Activated CD4-positive, alpha-beta memory T cell treated with anti-CD3 and anti-CD28 coated beads, Interleukin-2, amount 10 ng/mL, durations not matched to agents 7 days and 5 days (primary cell): ENCODE measurements at regions of chr22 and their contacts with region 1.

Region 1: DNA sequence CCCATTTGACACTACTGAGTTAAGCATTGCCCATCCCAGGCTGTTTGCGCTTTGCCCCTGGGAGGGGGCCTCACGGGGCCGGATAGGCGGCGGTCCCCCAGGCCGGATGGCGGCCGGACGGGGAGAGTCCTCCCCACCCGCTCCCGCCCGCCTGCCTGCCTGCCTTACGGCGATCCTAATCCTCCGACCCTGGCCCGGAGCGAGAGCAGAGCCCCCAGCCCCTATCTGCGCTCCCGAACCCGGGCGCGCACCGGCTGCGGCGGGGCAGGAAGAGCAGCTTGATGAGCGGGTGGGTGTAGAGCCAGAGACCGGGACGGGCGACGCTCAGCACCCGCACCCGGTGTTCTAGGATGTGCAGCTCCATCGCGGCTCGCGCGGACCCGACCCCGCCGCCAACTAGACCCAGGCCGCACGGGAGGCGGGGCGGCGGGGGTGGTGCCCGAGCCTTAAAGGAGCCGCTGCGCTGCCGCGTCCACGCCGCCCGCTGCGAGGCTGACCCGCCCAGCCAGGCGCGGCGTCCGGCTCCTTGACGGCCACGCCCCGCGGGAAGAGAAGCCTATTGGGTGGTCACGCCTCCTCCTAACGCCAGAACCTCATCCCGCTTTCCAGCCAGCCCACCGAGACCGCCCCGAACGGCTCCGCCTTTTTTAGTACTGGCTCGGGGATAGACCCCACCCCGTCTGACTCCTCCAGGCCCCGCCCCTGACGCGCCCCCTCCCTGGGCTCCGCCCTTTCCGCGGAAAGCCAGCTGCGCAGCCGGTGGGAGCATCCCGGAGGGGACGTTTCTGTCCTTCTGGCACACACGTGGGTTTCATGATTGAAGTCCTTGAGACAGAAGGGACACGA is at the start of gene CASTOR1:
- DNase-seq: peak; percentile 94
- H3K4me3 Mint-ChIP-seq: peak within 1 kb of the TSS; percentile 77
- H3K27ac Mint-ChIP-seq: peak within 1 kb of the TSS; percentile 81
- H3K4me1 Mint-ChIP-seq: peaks cover 61% of the 10 kb centered on the region
- H3K27me3 Mint-ChIP-seq: no peaks in the 10 kb centered on the region
- total RNA-seq, gene CASTOR1: 14.2 to 14.6 TPM

Region 2: GRCh38 chr22:29951791-29952413 is 337.5 kb before region 1 on chr22:
- CTCF ChIA-PET with region 1: no interaction called
- POLR2A ChIA-PET with region 1: no interaction called
- DNase-seq: no peak
- H3K4me3 Mint-ChIP-seq: no peak overlapping the region
- H3K27ac Mint-ChIP-seq: no peak overlapping the region
- H3K4me1 Mint-ChIP-seq: no peaks in the 10 kb centered on the region
- H3K27me3 Mint-ChIP-seq: no peaks in the 10 kb centered on the region

Region 3: GRCh38 chr22:30116362-30117117 is 172.8 kb before region 1 on chr22:
- CTCF ChIA-PET with region 1: interaction called, 19 read pairs
- POLR2A ChIA-PET with region 1: no interaction called
- DNase-seq: no peak
- H3K4me3 Mint-ChIP-seq: no peak overlapping the region
- H3K27ac Mint-ChIP-seq: no peak overlapping the region
- H3K4me1 Mint-ChIP-seq: peaks cover 37% of the 10 kb centered on the region
- H3K27me3 Mint-ChIP-seq: peaks cover 5% of the 10 kb centered on the region

Region 4: GRCh38 chr22:30224161-30224857 is 65.0 kb before region 1 on chr22:
- CTCF ChIA-PET with region 1: no interaction called
- POLR2A ChIA-PET with region 1: no interaction called
- DNase-seq: no peak
- H3K4me3 Mint-ChIP-seq: no peak overlapping the region
- H3K27ac Mint-ChIP-seq: no peak overlapping the region
- H3K4me1 Mint-ChIP-seq: peaks cover 93% of the 10 kb centered on the region
- H3K27me3 Mint-ChIP-seq: no peaks in the 10 kb centered on the region

Region 5: GRCh38 chr22:30277547-30278344 is 11.6 kb before region 1 on chr22:
- CTCF ChIA-PET with region 1: interaction called, 12 read pairs
- POLR2A ChIA-PET with region 1: interaction called, 7 read pairs
- DNase-seq: no peak
- H3K4me3 Mint-ChIP-seq: no peak overlapping the region
- H3K27ac Mint-ChIP-seq: no peak overlapping the region
- H3K4me1 Mint-ChIP-seq: peaks cover 78% of the 10 kb centered on the region
- H3K27me3 Mint-ChIP-seq: no peaks in the 10 kb centered on the region

Region 6: GRCh38 chr22:30326706-30327362 is 37.5 kb after region 1 on chr22 and contains the start of gene TBC1D10A:
- CTCF ChIA-PET with region 1: interaction called, 29 read pairs
- POLR2A ChIA-PET with region 1: interaction called, 88 read pairs
- DNase-seq: peak; percentile 96
- H3K4me3 Mint-ChIP-seq: peak within 1 kb of the TSS; percentile 88
- H3K27ac Mint-ChIP-seq: peak within 1 kb of the TSS; percentile 74
- H3K4me1 Mint-ChIP-seq: peaks cover 49% of the 10 kb centered on the region
- H3K27me3 Mint-ChIP-seq: no peaks in the 10 kb centered on the region
- total RNA-seq, gene TBC1D10A: 37.9 to 41.6 TPM

Region 7: DNA sequence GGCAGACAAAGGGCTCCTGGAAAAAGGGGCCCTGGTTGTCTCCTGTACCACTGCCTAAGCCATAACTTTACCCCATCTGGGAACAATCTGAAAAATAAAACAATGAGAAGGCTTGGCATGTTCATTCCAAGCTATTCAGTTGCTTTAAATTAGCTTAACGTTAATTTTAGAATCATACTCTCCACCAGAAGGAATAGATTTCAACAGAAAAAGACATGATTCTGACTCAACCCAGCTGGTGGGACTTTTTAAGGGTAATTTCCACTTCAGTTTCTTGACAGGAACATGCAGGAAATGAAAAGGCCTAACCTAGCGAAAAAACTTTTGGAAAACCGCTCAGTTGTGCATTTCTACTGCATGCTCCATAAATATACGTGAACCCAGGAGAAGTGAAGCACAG is 59.5 kb after region 1 on chr22:
- CTCF ChIA-PET with region 1: interaction called, 24 read pairs
- POLR2A ChIA-PET with region 1: interaction called, 4 read pairs
- DNase-seq: no peak
- H3K4me3 Mint-ChIP-seq: no peak overlapping the region
- H3K27ac Mint-ChIP-seq: peak overlapping the region; percentile 58
- H3K4me1 Mint-ChIP-seq: peaks cover 86% of the 10 kb centered on the region
- H3K27me3 Mint-ChIP-seq: no peaks in the 10 kb centered on the region

Region 8: DNA sequence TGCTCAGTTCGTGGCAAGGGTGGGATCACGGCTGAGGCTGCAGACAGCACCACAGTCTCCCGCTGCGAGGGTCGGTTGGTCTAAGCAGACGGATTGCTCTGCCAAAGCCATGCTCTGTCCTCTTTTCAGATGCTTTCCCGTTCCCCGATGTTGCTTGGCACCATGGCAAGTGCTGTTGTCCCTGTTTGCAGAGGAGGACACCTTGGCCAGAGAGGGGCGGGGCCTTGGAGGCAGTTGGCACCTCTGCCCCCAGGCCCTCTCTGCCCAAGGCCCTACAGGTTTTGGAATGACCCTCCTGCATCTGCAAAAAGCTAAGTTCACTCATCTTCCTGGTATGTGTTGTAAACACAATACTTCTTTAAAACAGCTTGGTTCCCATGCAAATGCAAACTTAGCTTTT is 79.1 kb after region 1 on chr22:
- CTCF ChIA-PET with region 1: interaction called, 13 read pairs
- POLR2A ChIA-PET with region 1: interaction called, 3 read pairs
- DNase-seq: no peak
- H3K4me3 Mint-ChIP-seq: no peak overlapping the region
- H3K27ac Mint-ChIP-seq: no peak overlapping the region
- H3K4me1 Mint-ChIP-seq: no peaks in the 10 kb centered on the region
- H3K27me3 Mint-ChIP-seq: no peaks in the 10 kb centered on the region

Region 9: GRCh38 chr22:30423982-30424963 is 134.9 kb after region 1 on chr22:
- CTCF ChIA-PET with region 1: interaction called, 33 read pairs
- POLR2A ChIA-PET with region 1: interaction called, 18 read pairs
- DNase-seq: peak; percentile 99
- H3K4me3 Mint-ChIP-seq: peak overlapping the region; percentile 94
- H3K27ac Mint-ChIP-seq: peak overlapping the region; percentile 94
- H3K4me1 Mint-ChIP-seq: peaks cover 55% of the 10 kb centered on the region
- H3K27me3 Mint-ChIP-seq: no peaks in the 10 kb centered on the region